Psoas muscle (tissue), 8 donors: ENCODE measurements at regions of chr7 and their contacts with region 1.

Region 1: DNA sequence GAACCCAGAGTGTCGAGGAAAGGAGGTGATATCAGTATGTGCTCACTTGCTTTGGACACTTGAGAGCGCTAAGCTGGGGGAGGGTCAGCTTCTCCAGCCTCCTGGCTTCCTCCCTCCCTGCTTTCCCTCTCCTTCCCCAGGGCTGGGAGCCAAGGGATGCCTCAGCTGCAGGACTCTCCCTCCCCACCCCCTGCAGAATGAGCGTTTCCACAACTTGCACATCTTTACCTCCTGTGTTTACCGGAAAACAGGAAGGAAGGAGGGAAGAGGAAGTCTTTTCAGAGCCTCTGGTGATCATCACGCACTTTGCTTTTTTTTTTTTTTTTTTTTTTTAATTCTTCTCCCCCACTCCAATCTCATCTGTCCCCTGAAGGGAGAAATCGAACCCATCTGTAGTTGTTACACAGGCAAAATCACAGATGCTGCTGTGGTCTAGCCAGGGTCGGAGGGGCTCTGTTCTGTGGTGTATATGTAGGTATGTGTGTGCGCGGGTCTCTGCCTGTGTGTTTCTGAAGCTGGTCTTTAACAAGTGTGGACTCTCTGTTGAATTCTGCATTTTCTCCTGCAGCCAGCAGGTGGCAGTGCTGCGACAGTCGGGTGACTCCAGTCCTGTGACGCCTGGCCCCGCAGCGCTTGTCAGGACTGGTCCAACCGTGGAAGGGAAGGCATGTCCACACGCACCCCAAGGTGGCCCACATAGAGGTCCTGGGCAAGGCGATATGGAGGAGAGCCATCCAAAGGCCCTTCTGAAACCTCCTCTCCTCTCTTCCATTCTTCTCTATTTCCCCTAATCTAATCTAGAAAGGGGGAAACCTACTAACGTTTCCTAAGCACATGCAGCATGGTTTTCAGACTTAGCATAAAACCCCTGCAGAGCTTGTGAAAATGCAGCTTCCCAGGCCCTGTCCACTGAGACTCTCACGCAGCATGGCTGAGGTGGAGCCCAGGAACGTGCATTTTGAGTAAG is 257.6 kb downstream of the PLXNA4 start:
- DNase-seq: peak; percentile 87 to 92
- ATAC-seq: peak; percentile 92 to 98 (median 92)
- H3K4me3 ChIP-seq: no peak overlapping the region
- H3K27ac ChIP-seq: no peak overlapping the region
- H3K4me1 ChIP-seq: no peaks in the 10 kb centered on the region
- H3K27me3 ChIP-seq: peaks cover 0 to 11% (median 6%) of the 10 kb centered on the region in 3 donors
- CTCF ChIP-seq: peak; percentile 89

Region 2: DNA sequence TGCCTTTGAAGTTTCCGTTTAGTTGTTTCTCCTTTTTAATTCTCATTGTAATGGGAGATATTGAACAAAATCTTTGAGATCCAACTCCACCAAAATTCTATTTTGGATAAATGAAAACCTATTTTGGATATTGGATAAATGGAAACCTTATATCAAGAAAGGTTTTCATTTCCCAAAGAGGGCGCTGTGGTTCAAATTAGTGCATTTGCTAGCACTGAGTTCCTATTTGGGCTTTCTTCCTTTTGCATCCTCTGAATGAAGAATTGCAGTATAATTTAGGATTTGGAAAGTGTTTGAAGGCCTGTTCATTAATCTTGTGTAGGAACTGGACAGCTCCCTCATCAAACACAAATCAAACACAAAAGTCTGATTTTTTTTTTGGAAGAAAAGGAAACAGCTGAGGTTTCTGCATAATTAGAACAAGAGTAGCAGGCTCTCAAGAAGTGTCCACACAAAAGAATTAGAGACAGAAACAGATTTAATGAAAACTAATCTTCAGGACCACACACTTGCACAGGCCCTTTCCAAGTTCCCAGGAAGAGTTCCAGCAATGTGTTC is 1503.8 kb before region 1 on chr7:
- intact Hi-C with region 1: no loop called
- DNase-seq: no peak
- ATAC-seq: no peak
- H3K4me3 ChIP-seq: no peak overlapping the region
- H3K27ac ChIP-seq: no peak overlapping the region
- H3K4me1 ChIP-seq: no peaks in the 10 kb centered on the region
- H3K27me3 ChIP-seq: no peaks in the 10 kb centered on the region
- CTCF ChIP-seq: no peak

Region 3: DNA sequence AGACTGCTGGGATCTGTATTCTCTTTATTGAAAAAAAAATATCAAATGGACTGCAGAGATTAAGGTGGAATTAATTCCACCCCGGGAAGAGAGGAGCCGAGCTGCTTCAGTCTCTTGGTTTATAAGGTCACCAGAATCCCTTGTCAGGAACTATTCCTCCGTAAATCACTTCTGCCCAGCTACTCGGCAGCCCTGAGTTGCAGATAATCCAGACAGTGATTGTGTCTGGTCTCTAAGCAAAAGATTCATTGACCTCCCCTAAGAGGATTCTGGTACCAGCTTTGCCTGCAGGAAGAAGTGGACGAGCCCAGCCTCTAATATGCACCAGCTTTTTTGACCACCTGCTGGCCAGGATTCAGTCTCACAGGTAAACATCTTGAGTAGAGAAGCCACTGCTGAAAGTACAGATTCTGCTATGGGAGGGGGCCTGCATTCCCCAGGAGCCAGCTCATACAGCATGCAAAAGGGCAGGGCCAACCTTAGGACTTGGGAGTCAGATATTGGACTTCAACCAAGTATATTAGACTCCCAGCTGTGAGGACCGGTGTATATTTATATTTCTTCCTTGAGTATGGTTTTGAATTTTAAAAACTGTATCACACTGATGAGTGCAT is 284.7 kb after region 1 on chr7:
- intact Hi-C with region 1: no loop called
- DNase-seq: no peak
- ATAC-seq: no peak
- H3K4me3 ChIP-seq: no peak overlapping the region
- H3K27ac ChIP-seq: no peak overlapping the region
- H3K4me1 ChIP-seq: no peaks in the 10 kb centered on the region
- H3K27me3 ChIP-seq: peaks cover 0 to 5% (median 0%) of the 10 kb centered on the region in 3 donors
- CTCF ChIP-seq: no peak

Region 4: DNA sequence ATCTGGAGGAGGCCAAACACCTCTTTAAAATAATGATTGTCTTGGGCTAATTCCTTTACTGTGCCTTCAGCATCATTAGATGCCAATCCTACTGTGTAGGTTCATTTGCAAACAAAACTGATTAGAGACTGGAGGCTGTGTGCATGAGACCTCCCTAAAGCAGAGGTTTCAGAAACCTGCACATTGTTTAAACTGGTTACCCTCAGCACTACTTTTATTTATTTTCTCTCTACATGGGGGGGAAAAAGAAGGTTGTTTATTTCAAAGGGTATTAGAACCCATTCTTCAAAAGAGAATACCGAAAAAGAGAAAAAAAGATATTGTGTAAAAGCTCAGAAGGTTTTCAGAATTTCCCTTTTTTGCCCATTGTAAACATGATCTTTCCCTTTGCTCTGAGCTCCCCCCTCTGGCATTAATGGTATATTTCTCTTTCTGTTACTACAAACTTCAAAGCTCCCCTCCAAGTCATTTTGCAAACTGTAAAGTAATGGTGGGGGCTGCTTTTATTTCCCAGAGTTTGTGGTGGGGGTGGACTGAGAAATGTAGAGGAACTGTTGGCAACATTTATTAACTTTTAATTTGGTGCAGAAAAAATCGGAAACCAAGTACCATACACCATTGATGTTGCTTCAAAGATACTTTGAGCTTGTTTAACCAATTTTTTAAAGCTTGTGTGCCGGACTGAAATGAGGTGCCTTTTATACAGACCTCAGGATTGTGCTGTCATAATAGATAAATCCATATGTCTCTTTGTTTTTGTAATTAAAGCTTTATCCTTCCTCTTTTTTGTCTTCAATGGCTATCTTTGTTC is 1115.6 kb after region 1 on chr7:
- intact Hi-C with region 1: loop called (anchors 10 kb)
- DNase-seq: no peak
- ATAC-seq: peak in 1 of 4 donors; percentile 73
- H3K4me3 ChIP-seq: no peak overlapping the region
- H3K27ac ChIP-seq: no peak overlapping the region
- H3K4me1 ChIP-seq: peaks cover 6% of the 10 kb centered on the region
- H3K27me3 ChIP-seq: no peaks in the 10 kb centered on the region
- CTCF ChIP-seq: peak; percentile 48